Colonic mucosa (tissue), 4 donors: ENCODE measurements at regions of chr10 and their contacts with region 1.

Region 1: DNA sequence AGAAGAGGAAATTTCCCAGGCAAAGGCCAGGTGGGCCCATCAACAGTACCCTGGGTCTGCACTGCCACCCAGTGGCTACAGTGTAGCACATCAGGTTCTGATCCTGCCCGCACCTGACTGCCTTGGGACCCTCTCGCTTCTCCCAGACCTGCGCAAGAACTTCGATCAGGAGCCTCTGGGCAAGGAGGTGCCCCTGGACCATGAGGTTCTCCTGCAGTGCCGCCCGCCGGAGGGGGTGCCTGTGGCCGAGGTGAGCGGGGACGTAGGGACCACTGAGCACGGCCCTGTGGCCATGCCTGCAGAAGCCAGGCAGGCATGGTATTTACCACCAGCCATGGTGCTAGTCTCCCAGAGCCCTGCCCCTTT is 33.9 kb upstream of the SLC29A3 start:
- DNase-seq: peak; percentile 46
- H3K4me3 ChIP-seq: no peak overlapping the region
- H3K27ac ChIP-seq: no peak overlapping the region
- H3K4me1 ChIP-seq: no peaks in the 10 kb centered on the region
- H3K27me3 ChIP-seq: no peaks in the 10 kb centered on the region
- CTCF ChIP-seq: peak; percentile 76

Region 2: GRCh38 chr10:70903262-70903921 is 381.8 kb before region 1 on chr10:
- intact Hi-C with region 1: loop called (anchors 5 kb)
- DNase-seq: peak; percentile 59
- H3K4me3 ChIP-seq: no peak overlapping the region
- H3K27ac ChIP-seq: no peak overlapping the region
- H3K4me1 ChIP-seq: no peaks in the 10 kb centered on the region
- H3K27me3 ChIP-seq: no peaks in the 10 kb centered on the region
- CTCF ChIP-seq: peak; percentile 86

Region 3: DNA sequence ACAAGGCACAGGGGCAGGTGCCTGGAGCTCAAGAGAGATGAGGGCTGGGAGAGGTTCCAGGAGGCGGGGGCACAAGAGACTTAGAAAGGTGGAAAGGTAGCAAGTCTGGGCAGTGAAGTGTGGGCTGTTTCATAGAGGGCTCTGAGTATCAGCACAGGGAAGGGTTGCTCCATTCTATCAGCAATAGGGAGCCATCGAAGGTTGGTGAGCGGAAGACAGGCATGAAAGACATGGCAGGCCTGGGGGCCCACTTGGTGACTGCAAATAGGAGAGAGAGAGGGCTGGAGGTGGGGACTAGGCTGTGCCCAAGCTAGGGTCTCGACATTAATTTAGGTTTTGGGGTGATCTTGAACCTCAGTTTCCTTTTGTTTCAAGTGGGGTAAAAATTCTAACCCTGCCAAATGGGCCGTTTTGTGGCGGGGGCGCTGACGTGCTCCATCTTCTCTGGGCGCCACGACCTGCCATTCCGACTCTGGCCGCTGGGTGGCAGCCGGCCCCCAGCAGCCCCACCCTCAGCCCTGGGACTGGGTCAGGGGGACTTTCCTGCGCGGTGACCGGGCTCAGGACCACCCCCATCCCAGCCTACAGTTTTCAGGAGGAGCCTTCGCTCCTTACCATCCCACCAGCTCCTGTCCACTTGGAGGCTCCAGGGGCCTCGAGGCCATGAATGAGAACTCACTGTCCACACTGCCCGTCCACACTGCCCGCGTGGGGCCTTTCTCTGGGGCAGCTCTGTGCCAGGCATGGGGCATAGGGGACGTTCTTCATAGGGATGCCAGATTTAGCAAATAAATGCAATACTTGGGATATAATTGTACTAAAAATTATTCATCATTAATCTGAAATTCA is 359.6 kb before region 1 on chr10:
- intact Hi-C with region 1: loop called (anchors 5 kb)
- DNase-seq: peak; percentile 32
- H3K4me3 ChIP-seq: no peak overlapping the region
- H3K27ac ChIP-seq: no peak overlapping the region
- H3K4me1 ChIP-seq: no peaks in the 10 kb centered on the region
- H3K27me3 ChIP-seq: no peaks in the 10 kb centered on the region
- CTCF ChIP-seq: peak; percentile 96

Region 4: DNA sequence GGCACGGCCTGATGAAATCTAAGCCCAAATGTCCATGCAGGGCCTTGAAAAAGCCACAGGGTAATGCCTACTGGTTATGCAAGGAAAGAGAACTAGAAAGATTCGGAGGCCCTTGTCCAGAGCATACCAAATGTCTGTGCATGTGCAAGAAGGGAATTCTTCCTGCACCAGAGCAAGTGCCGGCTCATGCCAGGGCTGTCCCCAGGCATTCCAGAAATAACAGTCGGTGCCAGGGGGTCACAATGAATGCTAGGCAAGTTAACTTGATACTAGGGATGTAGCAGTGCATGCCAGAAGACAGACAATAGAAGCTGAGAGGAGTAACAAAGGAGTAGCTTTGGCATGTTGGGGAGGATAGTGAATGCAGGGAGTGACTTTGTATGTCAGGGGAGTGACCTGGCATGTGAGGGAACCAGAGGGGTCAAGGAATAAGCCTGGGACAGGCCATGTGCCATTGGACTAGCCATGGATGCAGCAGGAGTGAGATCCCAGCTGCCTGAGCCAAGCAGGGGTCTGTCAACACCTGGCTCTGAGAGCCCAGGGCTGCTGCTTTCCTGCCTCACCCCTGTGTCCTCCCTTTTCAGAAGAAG is 192.3 kb before region 1 on chr10:
- intact Hi-C with region 1: no loop called
- DNase-seq: no peak
- H3K4me3 ChIP-seq: no peak overlapping the region
- H3K27ac ChIP-seq: no peak overlapping the region
- H3K4me1 ChIP-seq: no peaks in the 10 kb centered on the region
- H3K27me3 ChIP-seq: no peaks in the 10 kb centered on the region
- CTCF ChIP-seq: no peak